ENCODE measurements at regions of chr16 and their contacts with region 1.

Region 1: GRCh38 chr16:12289175-12290063 is 312.9 kb downstream of the SNX29 start:
- DNase-seq: no peak
- H3K4me3 ChIP-seq: no peak overlapping the region
- H3K27ac ChIP-seq: peak overlapping the region in 6 of 8 donors; percentile 13 to 75 (median 58)
- H3K4me1 ChIP-seq: peaks cover 0 to 28% (median 10%) of the 10 kb centered on the region in 6 donors
- H3K27me3 ChIP-seq: no peaks in the 10 kb centered on the region
- CTCF ChIP-seq: no peak
- POLR2A ChIP-seq: no peak

Region 2: DNA sequence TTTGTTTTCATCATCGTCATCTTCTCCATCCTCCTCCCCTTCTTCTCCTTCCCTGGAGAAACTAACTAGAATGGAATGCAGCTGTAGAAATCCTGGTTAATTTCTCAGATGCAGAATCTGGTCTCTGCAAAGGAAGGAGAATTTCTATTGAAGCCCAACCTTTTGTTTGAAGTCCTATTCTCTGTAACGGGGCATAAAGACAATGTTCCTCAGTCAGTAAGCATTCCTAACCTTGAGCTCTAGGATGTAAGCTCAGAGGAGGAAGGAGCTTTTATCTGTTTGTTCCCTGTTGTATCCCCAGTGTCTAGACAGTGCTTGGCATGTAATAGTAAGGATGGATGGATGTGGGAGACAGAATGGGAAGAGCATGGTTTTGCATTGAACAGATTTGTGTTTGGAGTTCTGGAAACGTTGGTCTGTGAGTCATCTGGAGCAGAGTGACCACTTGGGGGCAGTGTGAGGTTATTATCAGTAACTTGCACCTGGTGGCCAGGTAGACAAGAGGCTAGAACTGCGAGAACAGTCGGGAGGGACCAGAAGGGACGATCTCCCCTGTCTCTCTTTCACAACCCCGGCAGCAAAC is 50.8 kb after region 1 on chr16:
- intact Hi-C with region 1: loop called (anchors 10 kb)
- DNase-seq: no peak
- H3K4me3 ChIP-seq: no peak overlapping the region
- H3K27ac ChIP-seq: no peak overlapping the region
- H3K4me1 ChIP-seq: peaks cover 0 to 4% (median 0%) of the 10 kb centered on the region in 6 donors
- H3K27me3 ChIP-seq: no peaks in the 10 kb centered on the region
- CTCF ChIP-seq: peak in 7 of 11 experiments; percentile 8 to 55 (median 28)
- POLR2A ChIP-seq: no peak

Region 3: DNA sequence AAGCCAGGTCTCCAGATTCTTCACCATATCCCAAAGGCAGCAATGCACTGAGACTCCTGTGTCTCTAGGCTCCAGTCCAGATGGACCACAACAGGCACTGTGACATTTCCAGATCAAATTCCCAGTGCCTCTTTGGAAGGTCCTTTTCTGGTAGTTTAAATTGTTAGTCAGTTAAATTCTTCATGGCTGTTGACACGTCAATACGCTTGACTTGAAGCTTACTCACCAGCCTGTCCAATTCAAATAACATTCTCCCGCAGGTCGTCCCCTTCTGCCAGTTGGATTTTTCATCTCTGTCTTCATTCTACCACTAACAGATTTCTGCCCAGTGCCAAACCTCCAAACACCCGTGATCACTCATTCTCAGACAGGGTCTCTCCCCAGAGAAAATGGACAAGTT is 698.7 kb after region 1 on chr16:
- intact Hi-C with region 1: no loop called
- DNase-seq: no peak
- H3K4me3 ChIP-seq: no peak overlapping the region
- H3K27ac ChIP-seq: no peak overlapping the region
- H3K4me1 ChIP-seq: no peaks in the 10 kb centered on the region
- H3K27me3 ChIP-seq: peaks cover 0 to 6% (median 0%) of the 10 kb centered on the region in 7 donors
- CTCF ChIP-seq: no peak
- POLR2A ChIP-seq: no peak

Region 4: DNA sequence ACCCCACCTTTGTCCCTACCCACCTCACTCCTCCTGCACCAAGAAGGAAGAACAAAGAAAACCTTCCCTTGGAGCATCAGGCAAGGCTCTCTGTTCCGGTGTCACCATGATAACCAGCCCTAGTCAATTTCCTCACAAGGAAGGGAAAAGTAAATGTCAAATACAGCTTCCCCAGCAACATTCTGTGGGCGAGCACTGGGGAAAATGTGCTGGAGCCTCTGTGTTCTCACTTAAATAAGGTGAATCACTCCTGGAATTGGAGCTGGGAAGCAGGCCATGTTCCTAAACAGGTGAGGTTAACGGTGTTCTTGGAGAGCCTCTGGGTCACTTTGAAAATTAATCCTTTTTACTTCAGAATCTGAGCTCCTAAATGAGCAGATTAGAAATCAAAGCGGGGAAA is 1202.6 kb after region 1 on chr16:
- intact Hi-C with region 1: no loop called
- DNase-seq: no peak
- H3K4me3 ChIP-seq: no peak overlapping the region
- H3K27ac ChIP-seq: no peak overlapping the region
- H3K4me1 ChIP-seq: no peaks in the 10 kb centered on the region
- H3K27me3 ChIP-seq: peaks cover 0 to 7% (median 0%) of the 10 kb centered on the region in 7 donors
- CTCF ChIP-seq: no peak
- POLR2A ChIP-seq: no peak

Measured in spleen (tissue), 13 donors.